Uterus (tissue), 4 donors: ENCODE measurements at regions of chr12 and their contacts with region 1.

Region 1: GRCh38 chr12:52082988-52083637 is 3.6 kb downstream of the SMIM41 start:
- DNase-seq: peak in 1 of 2 donors; percentile 69
- H3K4me3 ChIP-seq: no peak overlapping the region
- H3K27ac ChIP-seq: peak overlapping the region; percentile 71 to 72
- H3K4me1 ChIP-seq: peaks cover 0 to 9% of the 10 kb centered on the region in 2 donors
- H3K27me3 ChIP-seq: no peaks in the 10 kb centered on the region
- CTCF ChIP-seq: peak; percentile 96 to 98 (median 96)
- POLR2A ChIP-seq: no peak

Region 2: DNA sequence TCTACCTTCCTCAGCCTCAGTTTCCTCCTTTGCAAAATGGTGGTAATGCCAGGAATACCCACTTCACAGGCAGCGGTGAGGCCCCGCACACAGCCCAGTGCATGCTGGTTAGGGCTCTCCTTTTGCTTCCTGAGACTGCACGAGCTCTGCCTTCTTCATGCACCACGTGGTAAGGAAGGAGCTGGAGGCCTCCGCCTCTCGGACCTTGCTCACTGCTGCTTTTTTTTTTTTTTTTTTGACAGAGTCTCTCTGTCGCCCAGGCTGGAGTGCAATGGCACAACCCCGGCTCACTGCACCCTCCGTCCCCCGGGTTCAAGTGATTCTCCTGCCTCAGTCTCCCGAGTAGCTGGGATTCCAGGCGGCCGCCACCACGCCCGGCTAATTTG is 58.3 kb before region 1 on chr12:
- intact Hi-C with region 1: loop called (anchors 1 kb)
- DNase-seq: no peak
- H3K4me3 ChIP-seq: no peak overlapping the region
- H3K27ac ChIP-seq: peak overlapping the region; percentile 83 to 92
- H3K4me1 ChIP-seq: peaks cover 0 to 4% of the 10 kb centered on the region in 2 donors
- H3K27me3 ChIP-seq: no peaks in the 10 kb centered on the region
- CTCF ChIP-seq: no peak
- POLR2A ChIP-seq: no peak

Region 3: DNA sequence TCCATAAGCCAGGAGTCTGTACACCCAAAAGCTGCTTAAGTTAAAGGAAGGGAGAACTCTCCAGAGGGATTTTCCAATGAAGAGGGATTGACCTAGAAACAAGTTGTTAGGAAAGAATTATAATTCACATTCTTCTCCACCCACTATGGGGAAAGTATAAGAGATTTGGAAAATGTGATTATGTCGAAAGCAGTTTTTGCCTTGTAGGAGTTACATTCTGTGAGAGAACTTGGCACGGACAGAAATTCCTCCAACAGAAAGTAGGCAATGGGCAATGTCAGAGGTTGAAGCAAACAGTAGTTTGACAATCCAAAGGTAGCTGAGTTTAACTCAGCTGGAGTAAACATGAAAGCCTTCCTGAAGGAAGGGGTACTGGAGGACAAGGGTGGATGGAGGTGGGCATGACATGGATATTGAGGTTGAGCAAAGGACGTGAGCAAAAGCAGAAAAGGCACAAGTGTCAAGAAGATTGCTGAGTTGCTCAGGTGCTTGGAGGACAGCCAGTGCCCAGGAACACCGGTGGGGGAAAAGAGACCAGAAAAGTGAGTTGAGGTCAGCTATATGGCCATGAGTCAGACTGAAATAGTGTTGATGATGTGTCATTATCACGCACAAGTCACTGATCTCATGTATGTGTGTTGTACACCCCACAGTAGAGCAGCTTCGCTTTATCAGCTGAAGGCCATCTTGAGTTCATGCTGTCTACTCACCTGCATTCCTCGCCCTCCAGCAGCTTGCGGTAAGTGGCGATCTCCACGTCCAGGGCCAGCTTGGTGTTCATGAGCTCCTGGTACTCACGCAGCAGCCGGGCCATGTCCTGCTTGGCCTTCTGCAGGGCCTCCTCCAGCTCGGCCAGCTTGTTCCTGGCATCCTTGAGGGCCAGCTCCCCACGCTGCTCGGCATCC is 433.1 kb after region 1 on chr12:
- intact Hi-C with region 1: no loop called
- DNase-seq: no peak
- H3K4me3 ChIP-seq: no peak overlapping the region
- H3K27ac ChIP-seq: no peak overlapping the region
- H3K4me1 ChIP-seq: no peaks in the 10 kb centered on the region
- H3K27me3 ChIP-seq: no peaks in the 10 kb centered on the region
- CTCF ChIP-seq: no peak
- POLR2A ChIP-seq: no peak